ENCODE measurements at regions of chr3 and their contacts with region 1.

Region 1: DNA sequence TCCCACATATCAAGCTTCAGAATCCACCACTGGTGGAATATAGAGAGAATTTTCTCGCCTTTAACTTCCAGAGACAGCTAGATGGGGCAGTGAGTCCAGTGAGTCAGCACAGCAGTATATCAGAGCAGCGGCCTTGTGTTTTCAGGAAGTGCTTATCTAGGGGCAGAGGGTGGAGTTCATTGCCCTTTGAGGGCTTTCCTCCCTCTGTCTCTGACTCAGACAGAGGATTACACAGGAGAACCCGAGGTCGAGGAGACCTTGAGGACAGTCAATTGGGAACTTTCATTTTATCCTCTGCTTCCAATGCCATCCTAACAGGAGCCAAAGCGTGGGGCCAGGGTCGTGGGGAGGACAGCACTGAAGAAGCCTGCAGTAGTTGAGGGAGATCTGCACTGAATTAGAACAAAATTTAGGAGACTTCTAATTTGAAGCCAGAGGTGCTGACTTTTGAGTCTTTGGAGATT is 109.6 kb upstream of the UMPS start:
- DNase-seq: peak; percentile 38
- ATAC-seq: peak; percentile 89
- H3K4me3 ChIP-seq: 0 out of 2 replicates have a peak overlapping the region, but pooled peaks have one; percentile 19
- H3K27ac ChIP-seq: peak overlapping the region; percentile 84
- H3K4me1 ChIP-seq: peaks cover 18% of the 10 kb centered on the region
- H3K27me3 ChIP-seq: no peaks in the 10 kb centered on the region
- CTCF ChIP-seq: no peak
- EP300 ChIP-seq: no peak
- POLR2A ChIP-seq: no peak
- RAD21 ChIP-seq: no peak

Region 2: GRCh38 chr3:124592621-124593441 is 27.8 kb before region 1 on chr3:
- CTCF ChIA-PET with region 1: interaction called, 5 read pairs
- POLR2A ChIA-PET with region 1: interaction called, 5 read pairs
- RAD21 ChIA-PET with region 1: interaction called, 4 read pairs
- SMC1A ChIA-PET with region 1: interaction called, 11 read pairs
- in situ Hi-C with region 1: no loop called
- intact Hi-C with region 1: no loop called
- DNase-seq: peak; percentile 70
- ATAC-seq: peak; percentile 91
- H3K4me3 ChIP-seq: peak overlapping the region; percentile 7; the same call in 1 of the 2 replicates
- H3K27ac ChIP-seq: peak overlapping the region; percentile 67
- H3K4me1 ChIP-seq: peaks cover 22% of the 10 kb centered on the region
- H3K27me3 ChIP-seq: no peaks in the 10 kb centered on the region
- CTCF ChIP-seq: no peak
- EP300 ChIP-seq: peak; percentile 11 to 14; a peak in 2 of 4 replicates
- POLR2A ChIP-seq: no peak
- RAD21 ChIP-seq: 0 out of 2 replicates have a peak, but pooled peaks have one; percentile 4

Region 3: DNA sequence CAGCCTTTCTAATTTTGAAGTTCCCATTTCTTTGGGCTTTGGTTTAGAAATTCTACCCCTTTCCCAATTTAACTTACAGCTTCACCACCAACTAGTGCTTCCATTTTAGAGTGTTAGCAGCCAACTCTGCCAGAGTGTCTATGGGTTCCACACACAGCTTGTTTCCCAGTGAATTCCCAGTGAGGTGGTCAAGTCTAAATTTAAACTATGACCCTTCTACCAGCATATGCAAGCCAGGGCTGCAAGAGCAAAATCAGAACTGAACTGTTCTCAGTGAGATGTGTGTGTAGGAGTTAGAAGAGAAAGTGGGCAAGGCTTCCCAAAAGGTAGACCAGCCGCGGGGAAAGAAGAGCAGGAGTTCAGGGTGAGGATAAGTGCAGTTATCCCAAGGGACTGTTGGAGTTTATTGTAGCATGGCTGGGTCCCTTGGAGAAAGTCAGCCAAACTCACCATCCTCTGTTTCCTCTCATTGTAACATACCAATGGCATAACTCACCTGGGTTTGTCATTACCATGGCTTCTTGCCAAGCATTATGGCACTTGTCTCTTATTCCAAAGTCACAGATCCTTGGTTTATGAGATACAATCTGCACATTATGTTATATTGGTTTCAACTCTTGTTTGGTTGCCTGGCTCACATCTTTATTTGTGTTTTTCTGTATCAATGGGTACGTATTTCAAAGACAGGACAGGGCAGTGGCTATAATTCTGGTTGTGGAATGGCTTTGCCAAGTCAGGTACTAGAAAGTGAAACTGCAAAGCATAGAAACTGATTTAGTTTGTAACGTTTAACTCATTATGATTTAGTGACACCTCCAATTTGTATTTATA is 20.6 kb before region 1 on chr3:
- CTCF ChIA-PET with region 1: interaction called, 4 read pairs
- POLR2A ChIA-PET with region 1: interaction called, 14 read pairs
- RAD21 ChIA-PET with region 1: interaction called, 5 read pairs
- SMC1A ChIA-PET with region 1: interaction called, 80 read pairs
- in situ Hi-C with region 1: no loop called
- intact Hi-C with region 1: no loop called
- DNase-seq: no peak
- ATAC-seq: peak; percentile 32; the same call in 1 of the 3 replicates
- H3K4me3 ChIP-seq: no peak overlapping the region
- H3K27ac ChIP-seq: no peak overlapping the region
- H3K4me1 ChIP-seq: no peaks in the 10 kb centered on the region
- H3K27me3 ChIP-seq: no peaks in the 10 kb centered on the region
- CTCF ChIP-seq: no peak
- EP300 ChIP-seq: no peak
- POLR2A ChIP-seq: no peak
- RAD21 ChIP-seq: no peak

Region 4: DNA sequence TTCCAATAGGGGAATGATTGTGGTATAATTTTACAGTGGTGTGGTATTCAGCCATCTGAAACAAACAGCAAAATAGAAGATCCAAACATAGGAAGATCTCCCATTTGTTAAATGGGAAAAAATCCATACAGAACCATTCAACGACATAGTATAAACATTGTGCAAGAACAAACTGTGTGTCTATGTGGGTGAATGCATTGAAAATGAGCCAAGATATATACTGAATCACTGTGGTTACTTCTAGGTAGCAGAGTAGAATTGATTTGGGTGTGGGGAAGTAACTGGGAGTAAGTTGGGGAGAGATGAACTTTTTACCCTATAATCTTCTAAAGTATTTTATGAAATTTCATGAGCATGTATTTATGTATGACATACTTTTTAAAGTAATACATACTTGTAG is 13.5 kb before region 1 on chr3:
- CTCF ChIA-PET with region 1: interaction called, 3 read pairs
- POLR2A ChIA-PET with region 1: interaction called, 14 read pairs
- RAD21 ChIA-PET with region 1: interaction called, 4 read pairs
- SMC1A ChIA-PET with region 1: interaction called, 80 read pairs
- in situ Hi-C with region 1: no loop called
- intact Hi-C with region 1: no loop called
- DNase-seq: no peak
- ATAC-seq: no peak
- H3K4me3 ChIP-seq: no peak overlapping the region
- H3K27ac ChIP-seq: no peak overlapping the region
- H3K4me1 ChIP-seq: no peaks in the 10 kb centered on the region
- H3K27me3 ChIP-seq: no peaks in the 10 kb centered on the region
- CTCF ChIP-seq: no peak
- EP300 ChIP-seq: no peak
- POLR2A ChIP-seq: no peak
- RAD21 ChIP-seq: no peak

Region 5: GRCh38 chr3:124634210-124635168 is 13.9 kb after region 1 on chr3:
- CTCF ChIA-PET with region 1: interaction called, 4 read pairs
- POLR2A ChIA-PET with region 1: interaction called, 20 read pairs
- RAD21 ChIA-PET with region 1: interaction called, 14 read pairs
- SMC1A ChIA-PET with region 1: interaction called, 34 read pairs
- in situ Hi-C with region 1: no loop called
- intact Hi-C with region 1: no loop called
- DNase-seq: no peak
- ATAC-seq: peak; percentile 53
- H3K4me3 ChIP-seq: no peak overlapping the region
- H3K27ac ChIP-seq: no peak overlapping the region
- H3K4me1 ChIP-seq: peaks cover 22% of the 10 kb centered on the region
- H3K27me3 ChIP-seq: no peaks in the 10 kb centered on the region
- CTCF ChIP-seq: no peak
- EP300 ChIP-seq: no peak
- POLR2A ChIP-seq: no peak
- RAD21 ChIP-seq: no peak

Region 6: GRCh38 chr3:124639406-124640237 is 19.0 kb after region 1 on chr3:
- CTCF ChIA-PET with region 1: interaction called, 4 read pairs
- POLR2A ChIA-PET with region 1: interaction called, 20 read pairs
- RAD21 ChIA-PET with region 1: interaction called, 14 read pairs
- SMC1A ChIA-PET with region 1: interaction called, 34 read pairs
- in situ Hi-C with region 1: no loop called
- intact Hi-C with region 1: no loop called
- DNase-seq: peak; percentile 77
- ATAC-seq: peak; percentile 81
- H3K4me3 ChIP-seq: no peak overlapping the region; the same call in 1 of the 2 replicates
- H3K27ac ChIP-seq: peak overlapping the region; percentile 40
- H3K4me1 ChIP-seq: peaks cover 23% of the 10 kb centered on the region
- H3K27me3 ChIP-seq: no peaks in the 10 kb centered on the region
- CTCF ChIP-seq: no peak
- EP300 ChIP-seq: peak in 1 of 2 experiments; percentile 47; a peak in 2 of 4 replicates
- POLR2A ChIP-seq: no peak
- RAD21 ChIP-seq: no peak

Measured in GM12878 (cell line).